ENCODE measurements at regions of chr17 and their contacts with region 1.

Region 1: GRCh38 chr17:59859444-59860025 is 33.2 kb downstream of the TUBD1 start:
- DNase-seq: no peak
- H3K4me3 ChIP-seq: no peak overlapping the region
- H3K27ac ChIP-seq: no peak overlapping the region
- H3K4me1 ChIP-seq: no peaks in the 10 kb centered on the region
- H3K27me3 ChIP-seq: no peaks in the 10 kb centered on the region
- CTCF ChIP-seq: peak; percentile 43 to 59

Region 2: DNA sequence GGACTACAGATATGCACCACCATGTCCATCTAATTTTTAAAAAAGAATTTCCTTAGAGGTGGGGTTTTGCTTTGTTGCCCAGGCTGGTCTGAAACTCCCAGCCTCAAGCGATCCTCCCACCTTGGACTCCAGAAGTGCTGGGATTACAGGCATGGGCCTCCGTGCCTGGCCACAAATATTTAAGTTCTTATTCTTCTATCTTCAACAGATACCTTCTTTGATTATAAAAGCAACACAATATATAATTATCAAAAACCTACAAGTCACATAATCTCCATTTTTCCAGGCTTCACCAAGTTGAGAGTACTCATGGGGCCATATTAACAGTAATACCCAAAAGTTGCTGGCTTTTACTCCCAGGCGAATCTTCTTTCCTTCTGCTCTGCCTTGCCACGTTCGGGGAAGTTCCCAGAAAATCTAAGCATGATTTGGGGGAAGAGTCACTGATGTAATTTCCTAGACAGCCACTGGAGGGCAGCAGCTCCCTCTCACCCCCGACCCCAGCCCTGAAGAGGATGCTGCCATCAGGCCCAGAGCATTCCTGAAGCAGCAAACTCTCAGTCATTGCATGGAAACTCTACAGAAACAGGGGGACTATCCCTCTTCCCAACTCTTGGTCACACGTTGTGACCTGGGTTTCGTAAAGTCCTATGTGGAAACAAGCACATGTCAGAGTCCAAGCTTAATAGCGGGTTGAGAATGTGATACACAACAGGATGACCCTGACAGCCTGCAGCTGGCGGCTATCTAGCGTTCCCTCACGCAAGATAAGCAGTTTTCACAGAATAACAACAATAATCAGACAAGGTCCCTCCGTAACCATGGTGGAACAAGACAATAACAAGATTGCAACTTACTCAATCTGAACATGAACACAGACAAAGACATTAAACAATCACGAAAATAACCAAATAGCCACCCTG is 338.1 kb before region 1 on chr17:
- CTCF ChIA-PET with region 1: no interaction called
- dilution Hi-C with region 1: no loop called
- in situ Hi-C with region 1: no loop called
- intact Hi-C with region 1: loop called (anchors 1 kb)
- DNase-seq: peak; percentile 56
- H3K4me3 ChIP-seq: no peak overlapping the region
- H3K27ac ChIP-seq: no peak overlapping the region
- H3K4me1 ChIP-seq: no peaks in the 10 kb centered on the region
- H3K27me3 ChIP-seq: no peaks in the 10 kb centered on the region
- CTCF ChIP-seq: peak; percentile 88 to 91

Region 3: GRCh38 chr17:59707114-59707970 is 152.2 kb before region 1 on chr17 and contains the starts of genes PTRH2 and VMP1:
- CTCF ChIA-PET with region 1: no interaction called
- dilution Hi-C with region 1: no loop called
- in situ Hi-C with region 1: no loop called
- intact Hi-C with region 1: loop called (anchors 2 kb)
- DNase-seq: peak; percentile 100
- H3K4me3 ChIP-seq: peak within 1 kb of the TSS; percentile 83 to 95 (median 88)
- H3K27ac ChIP-seq: peak within 1 kb of the TSS; percentile 97
- H3K4me1 ChIP-seq: peaks cover 15% of the 10 kb centered on the region
- H3K27me3 ChIP-seq: no peaks in the 10 kb centered on the region
- CTCF ChIP-seq: no peak
- total RNA-seq, gene PTRH2: 23.0 to 37.4 TPM
- total RNA-seq, gene VMP1: 177 to 211 TPM

Region 4: DNA sequence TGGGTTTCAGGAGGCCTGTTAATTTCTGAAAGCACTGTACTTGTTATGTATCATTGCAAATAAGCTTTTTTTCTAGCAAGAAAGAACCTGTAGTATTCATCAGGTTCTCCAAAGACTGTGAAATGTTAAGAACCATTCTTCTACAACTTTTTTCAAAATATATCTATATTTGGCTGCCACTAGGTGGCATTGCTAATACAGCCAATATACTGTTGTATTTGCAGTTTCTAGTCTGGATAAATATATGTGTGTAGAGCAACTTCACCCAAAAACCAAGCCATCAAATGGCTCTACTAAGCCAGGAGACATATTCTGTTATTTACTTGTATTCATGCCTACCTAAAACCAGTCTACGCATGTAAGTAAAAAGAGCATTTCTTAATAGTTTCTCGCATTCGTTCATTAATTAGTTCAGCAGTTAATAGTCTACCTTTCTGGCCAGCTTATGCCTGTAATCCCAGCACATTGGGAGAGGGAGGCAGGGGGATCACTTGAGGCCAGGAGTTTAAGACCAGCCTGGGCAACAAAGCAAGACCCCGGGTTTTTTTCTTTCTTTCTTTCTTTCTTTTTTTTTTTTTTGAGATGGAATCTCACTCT is 112.6 kb before region 1 on chr17:
- CTCF ChIA-PET with region 1: no interaction called
- dilution Hi-C with region 1: no loop called
- in situ Hi-C with region 1: no loop called
- intact Hi-C with region 1: loop called (anchors 1 kb)
- DNase-seq: peak; percentile 37
- H3K4me3 ChIP-seq: no peak overlapping the region
- H3K27ac ChIP-seq: no peak overlapping the region
- H3K4me1 ChIP-seq: no peaks in the 10 kb centered on the region
- H3K27me3 ChIP-seq: no peaks in the 10 kb centered on the region
- CTCF ChIP-seq: peak; percentile 48 to 63

Region 5: DNA sequence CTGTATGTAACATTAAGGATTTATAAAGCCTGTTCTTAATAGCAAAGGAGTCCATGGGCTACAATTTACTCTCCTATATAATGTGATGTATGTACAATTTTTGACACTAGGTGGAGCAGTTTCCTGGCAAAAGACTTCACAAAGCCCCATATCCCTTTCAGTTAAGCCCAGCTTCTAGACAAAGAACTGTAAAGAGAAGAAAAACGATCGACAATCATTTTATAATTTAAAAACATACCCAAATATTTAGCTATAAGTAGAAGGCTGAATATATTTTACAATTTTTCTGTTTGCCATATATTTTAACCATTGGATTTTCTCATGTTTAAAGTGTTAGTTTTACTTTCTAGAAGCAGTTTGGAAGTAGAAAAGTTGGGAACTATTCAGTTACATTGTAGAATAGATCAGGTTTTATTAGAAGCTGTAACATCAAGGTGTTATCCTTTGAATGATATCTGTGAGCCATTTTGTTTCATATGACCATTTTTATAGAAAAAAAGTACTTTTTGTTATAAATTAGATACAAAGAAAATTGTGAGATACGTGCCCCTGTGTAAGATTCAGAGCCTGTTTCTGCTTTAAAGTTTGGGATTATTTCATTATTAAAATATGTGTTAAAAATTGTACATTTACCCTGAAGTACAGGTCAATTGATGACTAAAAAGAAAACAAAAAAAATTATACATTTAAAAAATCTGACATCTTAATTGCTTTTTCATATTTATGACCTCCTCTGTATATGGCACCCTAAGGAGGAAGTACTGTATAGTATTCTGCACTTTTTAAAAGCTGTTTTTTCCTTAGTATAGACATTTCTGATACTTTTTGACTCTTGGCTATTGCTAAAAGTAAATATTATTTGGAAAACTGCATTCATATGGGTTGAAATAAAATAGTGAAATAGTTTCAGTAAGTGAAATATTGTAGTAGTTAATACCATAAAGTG is 105.7 kb before region 1 on chr17:
- CTCF ChIA-PET with region 1: interaction called, 4 read pairs
- dilution Hi-C with region 1: no loop called
- in situ Hi-C with region 1: no loop called
- intact Hi-C with region 1: loop called (anchors 1 kb)
- DNase-seq: peak; percentile 83
- H3K4me3 ChIP-seq: peak overlapping the region in 2 of 3 experiments; percentile 16 to 42
- H3K27ac ChIP-seq: peak overlapping the region; percentile 99
- H3K4me1 ChIP-seq: peaks cover 33% of the 10 kb centered on the region
- H3K27me3 ChIP-seq: no peaks in the 10 kb centered on the region
- CTCF ChIP-seq: peak; percentile 60 to 69

Region 6: DNA sequence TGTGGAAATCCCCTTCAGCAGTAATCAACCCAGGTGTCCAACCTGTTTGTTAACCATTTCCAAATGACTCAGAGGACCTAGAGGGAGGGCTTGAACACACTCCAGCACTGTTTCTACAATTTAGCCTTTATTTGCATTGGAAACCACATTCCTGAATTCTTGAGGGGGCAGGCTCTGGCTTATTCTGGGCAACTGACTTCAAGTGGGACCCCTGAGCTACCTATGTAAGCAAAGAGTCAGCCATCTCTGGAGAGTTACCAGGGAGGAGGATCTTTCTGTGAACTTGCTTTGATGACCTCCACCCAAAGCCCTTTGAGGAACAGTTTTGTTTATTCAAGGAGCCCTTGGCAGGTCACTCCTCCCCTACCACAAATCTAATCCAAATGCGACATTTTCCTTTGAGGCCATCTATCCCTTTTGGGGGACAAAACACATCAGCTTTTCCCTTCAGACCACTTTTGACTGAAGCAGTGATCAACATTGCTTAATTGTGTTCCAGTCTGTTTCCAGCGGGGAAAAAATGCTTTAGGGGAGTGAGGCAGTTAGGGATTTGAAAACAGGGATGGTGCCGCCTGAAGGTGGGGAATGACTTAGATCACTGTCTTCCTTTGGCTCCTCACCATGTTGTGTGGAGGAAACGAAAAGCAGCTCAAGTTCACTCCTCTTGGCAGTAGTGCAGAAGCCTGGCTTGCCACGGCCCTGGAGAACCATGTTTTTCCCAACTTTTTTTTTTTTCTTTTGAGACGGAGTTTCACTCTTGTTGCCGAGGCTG is 13.0 kb before region 1 on chr17:
- CTCF ChIA-PET with region 1: no interaction called
- dilution Hi-C with region 1: no loop called
- in situ Hi-C with region 1: no loop called
- intact Hi-C with region 1: loop called (anchors 2 kb)
- DNase-seq: peak; percentile 95
- H3K4me3 ChIP-seq: peak overlapping the region in 1 of 3 experiments; percentile 11
- H3K27ac ChIP-seq: peak overlapping the region; percentile 100
- H3K4me1 ChIP-seq: peaks cover 36% of the 10 kb centered on the region
- H3K27me3 ChIP-seq: no peaks in the 10 kb centered on the region
- CTCF ChIP-seq: no peak

Region 7: DNA sequence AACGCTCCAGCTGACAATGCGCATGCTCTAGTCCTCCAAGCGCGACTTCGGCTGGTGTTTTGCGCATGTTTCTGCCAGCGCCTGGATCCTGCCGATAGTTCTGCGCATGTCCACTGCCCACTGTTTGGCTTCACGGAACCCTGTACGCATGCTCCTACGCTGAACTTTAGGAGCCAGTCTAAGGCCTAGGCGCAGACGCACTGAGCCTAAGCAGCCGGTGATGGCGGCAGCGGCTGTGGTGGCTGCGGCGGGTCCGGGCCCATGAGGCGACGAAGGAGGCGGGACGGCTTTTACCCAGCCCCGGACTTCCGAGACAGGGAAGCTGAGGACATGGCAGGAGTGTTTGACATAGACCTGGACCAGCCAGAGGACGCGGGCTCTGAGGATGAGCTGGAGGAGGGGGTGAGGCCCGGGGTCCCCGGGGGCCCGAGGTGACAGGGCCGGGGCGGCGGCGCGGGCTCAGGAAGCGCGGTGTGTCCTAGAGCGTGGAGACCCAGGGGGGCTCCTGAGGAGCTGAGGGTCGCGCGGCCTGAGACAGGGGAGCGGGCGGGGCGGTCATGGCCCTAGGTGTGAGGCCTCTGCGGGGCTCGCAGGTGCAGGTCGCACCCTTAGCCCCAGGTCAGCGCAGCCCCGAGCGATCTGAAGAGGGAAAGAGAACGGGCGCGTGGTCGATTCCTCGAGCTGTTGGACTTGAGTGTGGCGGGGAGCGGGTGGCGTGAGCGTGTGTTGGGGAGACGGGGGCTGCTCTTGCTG is 33.6 kb after region 1 on chr17 and contains the starts of genes RPS6KB1 and TUBD1:
- CTCF ChIA-PET with region 1: interaction called, 10 read pairs
- dilution Hi-C with region 1: no loop called
- in situ Hi-C with region 1: no loop called
- intact Hi-C with region 1: no loop called
- DNase-seq: peak; percentile 31
- H3K4me3 ChIP-seq: peak within 1 kb of the TSS; percentile 80 to 98 (median 95)
- H3K27ac ChIP-seq: peak within 1 kb of the TSS; percentile 78
- H3K4me1 ChIP-seq: peaks cover 5% of the 10 kb centered on the region
- H3K27me3 ChIP-seq: no peaks in the 10 kb centered on the region
- CTCF ChIP-seq: no peak
- total RNA-seq, gene RPS6KB1: 16.8 to 28.5 TPM
- total RNA-seq, gene TUBD1: 4.1 to 5.8 TPM